CD8-positive, alpha-beta T cell (primary cell): ENCODE measurements at regions of chr2 and their contacts with region 1.

Region 1: GRCh38 chr2:231674587-231675338 is 33.6 kb upstream of the PTMA start:
- DNase-seq: peak in 8 of 9 experiments; percentile 37 to 71 (median 58)
- ATAC-seq: peak; percentile 53
- H3K4me3 ChIP-seq: no peak overlapping the region
- H3K4me3 Mint-ChIP-seq: no peak overlapping the region
- H3K27ac ChIP-seq: no peak overlapping the region
- H3K27ac Mint-ChIP-seq: no peak overlapping the region
- H3K4me1 ChIP-seq: peaks cover 5% of the 10 kb centered on the region
- H3K4me1 Mint-ChIP-seq: peaks cover 6% of the 10 kb centered on the region
- H3K27me3 ChIP-seq: no peaks in the 10 kb centered on the region
- H3K27me3 Mint-ChIP-seq: peaks cover under 1% of the 10 kb centered on the region
- CTCF ChIP-seq: peak; percentile 52

Region 2: GRCh38 chr2:231648587-231649174 is 26.1 kb before region 1 on chr2:
- CTCF ChIA-PET with region 1: interaction called, 16 read pairs
- POLR2A ChIA-PET with region 1: no interaction called
- intact Hi-C with region 1: loop called in 1 of 2 experiments (anchors 1 kb)
- DNase-seq: peak in 7 of 9 experiments; percentile 31 to 65 (median 48)
- ATAC-seq: peak; percentile 77
- H3K4me3 ChIP-seq: no peak overlapping the region
- H3K4me3 Mint-ChIP-seq: no peak overlapping the region
- H3K27ac ChIP-seq: no peak overlapping the region
- H3K27ac Mint-ChIP-seq: no peak overlapping the region
- H3K4me1 ChIP-seq: no peaks in the 10 kb centered on the region
- H3K4me1 Mint-ChIP-seq: peaks cover 2% of the 10 kb centered on the region
- H3K27me3 ChIP-seq: no peaks in the 10 kb centered on the region
- H3K27me3 Mint-ChIP-seq: no peaks in the 10 kb centered on the region
- CTCF ChIP-seq: no peak

Region 3: GRCh38 chr2:231687133-231687852 is 12.5 kb after region 1 on chr2:
- CTCF ChIA-PET with region 1: interaction called, 15 read pairs
- POLR2A ChIA-PET with region 1: no interaction called
- intact Hi-C with region 1: no loop called
- DNase-seq: peak; percentile 39 to 82 (median 72)
- ATAC-seq: peak; percentile 95
- H3K4me3 ChIP-seq: no peak overlapping the region
- H3K4me3 Mint-ChIP-seq: no peak overlapping the region
- H3K27ac ChIP-seq: no peak overlapping the region
- H3K27ac Mint-ChIP-seq: no peak overlapping the region
- H3K4me1 ChIP-seq: no peaks in the 10 kb centered on the region
- H3K4me1 Mint-ChIP-seq: peaks cover 5% of the 10 kb centered on the region
- H3K27me3 ChIP-seq: no peaks in the 10 kb centered on the region
- H3K27me3 Mint-ChIP-seq: peaks cover 6% of the 10 kb centered on the region
- CTCF ChIP-seq: peak; percentile 63

Region 4: DNA sequence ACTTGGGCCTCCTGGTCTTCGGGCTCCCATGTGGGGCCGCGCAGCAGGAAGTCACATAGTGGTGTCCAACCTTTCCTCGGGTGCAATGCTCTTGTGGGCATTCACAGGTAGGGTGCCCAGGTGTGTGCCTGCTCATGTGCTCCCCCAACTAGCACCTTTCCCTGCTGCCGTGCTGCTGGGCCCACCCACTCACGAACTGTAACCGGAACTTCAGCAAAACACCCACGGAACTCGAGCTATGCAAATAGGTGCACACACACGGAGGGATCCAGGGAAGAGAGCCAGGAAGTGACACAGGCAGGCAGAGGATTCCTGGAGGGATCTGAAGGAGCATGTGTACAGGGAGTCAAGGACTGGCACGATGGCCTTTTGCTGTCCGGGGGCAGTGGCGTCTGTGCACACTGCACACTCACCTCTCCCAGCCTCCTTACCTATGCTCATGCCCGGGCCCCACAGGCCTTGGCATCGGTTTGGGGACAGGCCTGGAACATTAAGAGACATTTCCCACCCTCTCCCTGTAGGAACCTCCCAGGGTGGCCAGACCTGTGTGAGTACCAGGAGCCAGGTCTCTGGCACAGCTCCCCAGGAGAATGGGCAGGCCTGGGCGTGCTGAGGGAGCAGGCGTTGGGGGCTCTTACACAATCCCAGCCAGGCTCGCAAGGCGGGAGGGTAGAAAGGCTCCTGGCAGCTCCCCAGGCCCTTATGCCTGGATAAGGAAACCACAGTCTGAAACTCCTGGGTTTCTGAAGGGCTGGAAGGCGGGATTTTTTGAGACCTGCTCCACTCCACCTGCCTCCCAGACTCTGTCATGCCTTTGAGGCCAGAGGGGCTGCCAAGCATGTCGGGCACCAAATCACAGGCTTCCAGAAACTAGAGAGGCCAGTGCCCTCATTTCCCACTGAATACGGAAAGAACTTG is 27.0 kb after region 1 on chr2:
- CTCF ChIA-PET with region 1: interaction called, 67 read pairs
- POLR2A ChIA-PET with region 1: interaction called, 8 read pairs
- intact Hi-C with region 1: no loop called
- DNase-seq: no peak
- ATAC-seq: no peak
- H3K4me3 ChIP-seq: no peak overlapping the region
- H3K4me3 Mint-ChIP-seq: no peak overlapping the region
- H3K27ac ChIP-seq: no peak overlapping the region
- H3K27ac Mint-ChIP-seq: no peak overlapping the region
- H3K4me1 ChIP-seq: peaks cover 13% of the 10 kb centered on the region
- H3K4me1 Mint-ChIP-seq: peaks cover 18% of the 10 kb centered on the region
- H3K27me3 ChIP-seq: no peaks in the 10 kb centered on the region
- H3K27me3 Mint-ChIP-seq: no peaks in the 10 kb centered on the region
- CTCF ChIP-seq: no peak

Region 5: DNA sequence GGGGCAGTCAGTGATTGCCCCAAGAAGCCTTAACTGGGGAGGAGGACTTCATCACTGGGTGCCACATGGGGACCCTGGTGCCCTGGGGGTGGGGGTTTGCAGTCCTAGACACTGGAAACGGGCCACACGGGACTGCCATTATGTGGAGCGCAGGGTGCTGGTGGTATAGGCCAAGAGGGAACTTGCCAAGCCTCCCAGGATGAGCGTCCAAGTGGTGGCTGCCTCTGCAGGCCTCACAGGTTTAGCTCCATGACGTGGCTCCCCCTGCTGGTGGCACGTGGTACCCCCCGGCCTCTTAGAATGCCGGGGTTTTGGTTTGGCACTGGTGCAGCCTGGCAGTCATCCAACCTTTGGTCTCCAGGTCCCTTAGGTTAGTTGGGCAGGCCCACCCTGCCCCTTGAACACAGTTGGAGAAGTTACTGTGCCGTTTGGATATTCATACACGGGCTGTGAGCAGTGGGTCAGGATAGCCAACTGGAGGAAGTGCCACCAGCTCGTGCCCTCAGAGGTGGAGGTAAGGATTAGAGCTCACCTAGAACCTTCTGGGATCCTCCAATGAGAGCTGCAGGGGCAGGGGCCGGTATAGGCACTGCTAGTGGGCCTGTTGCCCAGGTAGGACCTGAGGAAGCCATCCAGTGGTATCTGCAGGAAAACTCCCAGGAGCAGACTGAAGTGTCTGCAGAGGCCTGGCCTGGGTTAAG is 39.1 kb after region 1 on chr2:
- CTCF ChIA-PET with region 1: interaction called, 783 read pairs
- POLR2A ChIA-PET with region 1: interaction called, 29 read pairs
- intact Hi-C with region 1: loop called (anchors 1 kb)
- DNase-seq: peak; percentile 84 to 95 (median 91)
- ATAC-seq: peak; percentile 43
- H3K4me3 ChIP-seq: no peak overlapping the region
- H3K4me3 Mint-ChIP-seq: peak overlapping the region; percentile 54
- H3K27ac ChIP-seq: peak overlapping the region in 1 of 2 experiments; percentile 55
- H3K27ac Mint-ChIP-seq: peak overlapping the region; percentile 94
- H3K4me1 ChIP-seq: peaks cover 37% of the 10 kb centered on the region
- H3K4me1 Mint-ChIP-seq: peaks cover 39% of the 10 kb centered on the region
- H3K27me3 ChIP-seq: no peaks in the 10 kb centered on the region
- H3K27me3 Mint-ChIP-seq: no peaks in the 10 kb centered on the region
- CTCF ChIP-seq: peak; percentile 81